Common myeloid progenitor, CD34-positive (primary cell): ENCODE measurements at regions of chr2 and their contacts with region 1.

Region 1: DNA sequence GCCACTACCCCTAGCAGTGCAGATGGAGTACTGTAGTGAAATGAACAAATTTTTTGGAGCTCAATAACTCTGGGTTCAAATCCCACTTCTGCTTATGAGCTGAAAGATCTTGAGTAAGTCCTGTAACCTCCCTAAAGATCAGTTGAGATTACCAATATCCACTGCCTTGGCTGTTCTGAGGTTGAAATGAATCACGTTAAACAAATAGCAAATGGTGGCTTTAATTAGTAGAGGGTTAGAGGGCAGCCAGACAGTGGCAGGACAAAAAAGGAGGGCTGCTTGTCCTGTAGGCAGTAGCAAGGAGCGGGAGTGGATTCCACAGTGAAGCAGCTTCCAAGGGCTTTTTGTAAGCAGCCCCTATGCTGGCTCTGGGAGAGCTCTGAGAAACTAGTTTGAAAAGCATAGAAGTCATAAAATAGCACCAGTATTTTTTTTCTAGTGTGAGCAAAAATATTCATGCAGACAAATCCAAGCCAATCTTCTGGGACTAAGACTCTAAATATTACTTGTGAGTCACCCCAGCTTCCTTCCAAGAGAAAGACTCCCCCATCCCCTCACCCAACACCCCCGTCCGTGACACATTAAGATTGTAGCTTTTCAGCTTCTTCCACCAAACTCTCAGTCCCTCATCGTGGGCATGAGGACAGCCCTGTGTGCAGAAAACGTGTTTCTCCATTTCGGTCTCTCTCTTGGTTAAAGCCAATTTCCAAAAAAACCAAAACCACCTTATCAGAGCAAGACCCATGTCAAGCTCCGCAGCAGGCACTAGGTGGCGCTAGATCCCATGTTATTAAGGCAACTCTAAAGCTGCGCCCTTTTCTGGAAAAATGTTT is 123.5 kb upstream of the LGALSL start:
- DNase-seq: peak; percentile 87 to 93 (median 88)
- H3K4me3 ChIP-seq: peak overlapping the region in 2 of 7 experiments; percentile 17 to 48
- H3K27ac ChIP-seq: no peak overlapping the region
- H3K4me1 ChIP-seq: peaks cover 2 to 20% (median 9%) of the 10 kb centered on the region in 4 experiments
- H3K27me3 ChIP-seq: peaks cover 0 to 1% (median 0%) of the 10 kb centered on the region in 5 experiments

Region 2: GRCh38 chr2:64311948-64312621 is 18.4 kb before region 1 on chr2:
- CTCF ChIA-PET with region 1: interaction called, 43 read pairs
- POLR2A ChIA-PET with region 1: no interaction called
- DNase-seq: peak in 2 of 3 donors; percentile 15 to 28
- H3K4me3 ChIP-seq: no peak overlapping the region
- H3K27ac ChIP-seq: no peak overlapping the region
- H3K4me1 ChIP-seq: no peaks in the 10 kb centered on the region
- H3K27me3 ChIP-seq: peaks cover 0 to 2% (median 0%) of the 10 kb centered on the region in 5 experiments

Region 3: GRCh38 chr2:64348386-64349130 is 18.1 kb after region 1 on chr2:
- CTCF ChIA-PET with region 1: interaction called, 16 read pairs
- POLR2A ChIA-PET with region 1: no interaction called
- DNase-seq: no peak
- H3K4me3 ChIP-seq: no peak overlapping the region
- H3K27ac ChIP-seq: no peak overlapping the region
- H3K4me1 ChIP-seq: no peaks in the 10 kb centered on the region
- H3K27me3 ChIP-seq: peaks cover 0 to 2% (median 0%) of the 10 kb centered on the region in 5 experiments

Region 4: DNA sequence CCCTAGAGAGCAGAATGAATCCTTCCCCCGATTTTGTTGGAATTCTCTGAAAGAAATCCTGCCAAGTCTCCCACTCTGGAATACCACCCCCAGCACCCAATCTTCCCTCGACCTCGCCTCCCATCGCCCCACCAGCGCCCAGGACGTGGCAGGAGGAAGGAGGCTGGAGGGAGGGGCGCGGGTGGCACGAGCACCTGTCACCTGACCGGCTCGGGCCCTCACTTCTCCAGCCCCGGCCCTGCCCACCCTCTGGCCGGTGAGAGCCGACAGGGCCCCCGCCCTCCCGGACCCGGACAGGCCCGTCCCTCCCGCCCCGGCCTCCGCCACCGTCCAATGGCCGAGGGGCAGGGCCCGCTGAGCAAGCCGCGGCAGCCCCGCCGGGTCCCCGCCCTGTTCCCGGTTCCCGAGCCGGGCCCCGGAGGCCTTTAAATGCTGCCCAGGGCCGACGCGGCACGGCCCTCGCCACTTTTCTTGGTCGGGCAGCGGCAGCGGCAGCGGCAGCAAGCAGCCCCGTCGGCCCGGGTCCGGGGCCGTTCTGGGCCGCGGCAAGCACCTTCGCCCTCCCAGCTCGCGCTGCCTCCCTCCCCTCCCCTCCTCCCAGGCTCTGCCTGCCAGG is 123.4 kb after region 1 on chr2 and contains the start of gene LGALSL:
- CTCF ChIA-PET with region 1: interaction called, 16 read pairs
- POLR2A ChIA-PET with region 1: interaction called, 3 read pairs
- DNase-seq: peak; percentile 46 to 76 (median 66)
- H3K4me3 ChIP-seq: peak within 1 kb of the TSS; percentile 60 to 80 (median 73)
- H3K27ac ChIP-seq: no peak within 1 kb of the TSS
- H3K4me1 ChIP-seq: peaks cover 0 to 21% (median 13%) of the 10 kb centered on the region in 4 experiments
- H3K27me3 ChIP-seq: peaks cover 0 to 7% (median 0%) of the 10 kb centered on the region in 5 experiments

Region 5: DNA sequence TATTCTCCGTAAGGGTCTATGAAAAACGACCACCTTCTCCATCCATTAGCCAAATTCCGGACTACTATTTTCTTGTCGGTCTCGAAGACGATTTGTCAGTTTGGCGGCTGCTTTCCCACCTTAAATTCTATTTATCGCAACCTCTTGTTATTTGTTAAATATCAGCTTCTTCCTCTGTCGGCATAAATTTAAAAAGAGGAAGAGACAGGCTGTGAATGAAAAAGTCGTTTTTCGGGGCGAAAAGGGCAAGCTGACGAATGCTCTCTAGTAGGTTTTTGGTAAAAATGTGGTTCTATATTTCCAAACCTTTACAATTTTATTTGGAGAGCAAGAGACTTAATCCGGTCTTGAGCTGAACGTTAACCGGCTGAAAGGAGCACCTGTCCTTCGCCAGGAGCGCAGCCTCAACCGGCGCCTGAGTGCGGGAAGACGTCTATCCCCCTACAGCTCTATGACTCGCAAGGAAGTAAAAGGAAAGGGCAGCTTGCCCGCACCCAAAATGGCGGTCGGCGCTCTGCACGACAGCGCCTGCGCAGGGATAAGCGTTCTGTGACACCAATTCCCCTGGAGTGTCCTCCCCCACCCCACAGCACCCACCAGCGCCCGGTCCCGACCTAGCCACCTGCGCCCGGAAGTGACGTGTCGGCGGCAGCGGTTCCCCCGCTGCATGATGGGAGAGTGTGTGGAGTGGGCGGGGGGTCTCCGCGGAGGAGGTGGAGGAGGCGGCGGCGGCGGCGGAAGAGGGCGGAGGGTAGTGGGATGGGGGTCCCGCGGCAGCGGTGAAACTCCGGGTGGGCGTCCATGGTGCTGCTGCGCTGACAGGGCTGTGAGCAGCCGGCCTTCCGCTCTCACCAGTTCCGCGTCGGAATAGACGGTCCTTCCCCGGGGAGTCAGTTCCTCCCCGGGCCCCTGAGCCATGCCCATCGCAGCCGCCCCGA is 193.4 kb after region 1 on chr2 and contains the start of gene AFTPH:
- CTCF ChIA-PET with region 1: interaction called, 14 read pairs
- POLR2A ChIA-PET with region 1: no interaction called
- DNase-seq: peak; percentile 99 to 100 (median 100)
- H3K4me3 ChIP-seq: peak within 1 kb of the TSS; percentile 89 to 100 (median 99)
- H3K27ac ChIP-seq: peak within 1 kb of the TSS; percentile 97
- H3K4me1 ChIP-seq: peaks cover 17 to 43% (median 21%) of the 10 kb centered on the region in 4 experiments
- H3K27me3 ChIP-seq: no peaks in the 10 kb centered on the region

Region 6: GRCh38 chr2:64562148-64562784 is 231.8 kb after region 1 on chr2:
- CTCF ChIA-PET with region 1: interaction called, 177 read pairs
- POLR2A ChIA-PET with region 1: no interaction called
- DNase-seq: peak; percentile 48 to 74 (median 71)
- H3K4me3 ChIP-seq: no peak overlapping the region
- H3K27ac ChIP-seq: no peak overlapping the region
- H3K4me1 ChIP-seq: peaks cover 6 to 24% (median 12%) of the 10 kb centered on the region in 4 experiments
- H3K27me3 ChIP-seq: no peaks in the 10 kb centered on the region